Endothelial cell of umbilical vein (primary cell): ENCODE measurements at regions of chr5 and their contacts with region 1.

Region 1: DNA sequence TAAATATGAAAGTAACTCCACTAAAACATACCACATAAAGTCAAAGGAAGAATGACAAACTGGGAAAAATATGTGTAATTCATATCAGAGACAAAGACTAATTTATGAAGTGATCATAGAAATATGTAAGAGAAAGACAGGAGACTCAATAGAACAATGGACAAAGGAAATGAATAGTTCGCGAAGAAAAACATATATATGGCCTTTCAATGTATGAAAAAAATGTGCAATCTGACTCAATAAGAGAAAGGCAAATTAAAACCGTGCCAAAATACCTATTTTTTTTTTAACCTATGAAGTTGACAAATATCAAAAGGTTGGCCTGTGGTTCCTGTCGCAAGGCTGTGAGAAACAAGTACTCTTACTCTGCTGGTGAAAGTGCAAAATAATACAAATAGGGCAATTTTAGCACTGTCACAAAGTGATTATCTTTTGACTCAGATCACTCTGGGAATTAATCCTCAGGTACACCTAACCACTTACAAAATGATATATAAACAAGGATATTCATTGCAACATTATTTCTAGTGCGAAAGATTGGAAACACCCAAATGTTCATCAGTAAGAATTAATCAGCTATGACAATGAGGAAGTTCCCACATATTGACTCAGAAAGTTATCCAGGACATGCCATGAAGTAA is 3.7 kb downstream of the C9 start:
- DNase-seq: peak; percentile 89
- H3K4me3 ChIP-seq: peak overlapping the region in 1 of 3 experiments; percentile 18
- H3K27ac ChIP-seq: peak overlapping the region; percentile 99
- H3K4me1 ChIP-seq: peaks cover 44% of the 10 kb centered on the region
- H3K27me3 ChIP-seq: no peaks in the 10 kb centered on the region
- CTCF ChIP-seq: no peak
- POLR2A ChIP-seq: no peak

Region 2: GRCh38 chr5:38396766-38397165 is 963.8 kb before region 1 on chr5:
- CTCF ChIA-PET with region 1: no interaction called
- POLR2A ChIA-PET with region 1: no interaction called
- dilution Hi-C with region 1: no loop called
- intact Hi-C with region 1: no loop called
- DNase-seq: no peak
- H3K4me3 ChIP-seq: no peak overlapping the region
- H3K27ac ChIP-seq: no peak overlapping the region
- H3K4me1 ChIP-seq: peaks cover 14% of the 10 kb centered on the region
- H3K27me3 ChIP-seq: no peaks in the 10 kb centered on the region
- CTCF ChIP-seq: no peak
- POLR2A ChIP-seq: no peak

Region 3: DNA sequence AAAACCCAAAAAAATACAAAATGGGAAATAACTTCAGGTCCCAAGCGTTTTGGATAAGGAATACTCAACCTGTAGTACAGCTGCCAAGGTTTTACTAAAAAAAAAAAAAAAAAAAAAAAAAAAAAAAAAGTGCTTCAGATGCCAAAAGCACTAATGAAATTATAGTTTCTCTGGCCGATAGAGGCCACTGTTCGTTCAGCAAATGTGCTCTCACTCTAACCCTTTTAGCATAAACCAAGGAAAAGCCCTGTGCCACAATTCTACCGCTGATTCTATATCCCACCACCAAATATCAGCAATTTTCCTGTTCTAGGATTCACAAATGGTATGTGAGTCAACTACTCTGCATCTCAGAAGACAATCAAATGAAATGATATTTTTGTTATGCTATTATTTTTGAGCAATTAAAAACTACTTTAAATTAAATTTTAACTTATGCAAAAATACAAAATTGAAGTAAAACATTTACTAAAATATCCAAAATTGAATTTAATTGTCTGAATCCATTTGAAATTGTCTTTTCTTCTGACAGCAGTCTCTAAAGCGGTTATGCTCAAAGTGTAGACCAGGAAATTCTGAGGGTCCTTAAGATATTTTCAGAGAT is 366.2 kb before region 1 on chr5:
- CTCF ChIA-PET with region 1: no interaction called
- POLR2A ChIA-PET with region 1: no interaction called
- dilution Hi-C with region 1: no loop called
- intact Hi-C with region 1: loop called (anchors 10 kb)
- DNase-seq: peak; percentile 76
- H3K4me3 ChIP-seq: no peak overlapping the region
- H3K27ac ChIP-seq: no peak overlapping the region
- H3K4me1 ChIP-seq: no peaks in the 10 kb centered on the region
- H3K27me3 ChIP-seq: no peaks in the 10 kb centered on the region
- CTCF ChIP-seq: peak; percentile 33 to 50
- POLR2A ChIP-seq: no peak

Region 4: GRCh38 chr5:39526914-39527477 is 166.4 kb after region 1 on chr5:
- CTCF ChIA-PET with region 1: no interaction called
- POLR2A ChIA-PET with region 1: no interaction called
- dilution Hi-C with region 1: no loop called
- intact Hi-C with region 1: loop called (anchors 1 kb)
- DNase-seq: peak; percentile 98
- H3K4me3 ChIP-seq: no peak overlapping the region
- H3K27ac ChIP-seq: peak overlapping the region; percentile 99
- H3K4me1 ChIP-seq: peaks cover 37% of the 10 kb centered on the region
- H3K27me3 ChIP-seq: no peaks in the 10 kb centered on the region
- CTCF ChIP-seq: no peak
- POLR2A ChIP-seq: peak; percentile 15